GM12878 (cell line): ENCODE measurements at regions of chr2 and their contacts with region 1.

Region 1: GRCh38 chr2:73970850-73971471 is 13.7 kb upstream of the TET3 start:
- DNase-seq: peak; percentile 88
- ATAC-seq: peak; percentile 84
- H3K4me3 ChIP-seq: peak overlapping the region; percentile 51; the same call in 1 of the 2 replicates
- H3K27ac ChIP-seq: peak overlapping the region; percentile 92
- H3K4me1 ChIP-seq: peaks cover 38% of the 10 kb centered on the region
- H3K27me3 ChIP-seq: no peaks in the 10 kb centered on the region
- CTCF ChIP-seq: no peak
- EP300 ChIP-seq: no peak
- POLR2A ChIP-seq: peak; percentile 53; the same call in 1 of the 2 replicates
- RAD21 ChIP-seq: no peak

Region 2: DNA sequence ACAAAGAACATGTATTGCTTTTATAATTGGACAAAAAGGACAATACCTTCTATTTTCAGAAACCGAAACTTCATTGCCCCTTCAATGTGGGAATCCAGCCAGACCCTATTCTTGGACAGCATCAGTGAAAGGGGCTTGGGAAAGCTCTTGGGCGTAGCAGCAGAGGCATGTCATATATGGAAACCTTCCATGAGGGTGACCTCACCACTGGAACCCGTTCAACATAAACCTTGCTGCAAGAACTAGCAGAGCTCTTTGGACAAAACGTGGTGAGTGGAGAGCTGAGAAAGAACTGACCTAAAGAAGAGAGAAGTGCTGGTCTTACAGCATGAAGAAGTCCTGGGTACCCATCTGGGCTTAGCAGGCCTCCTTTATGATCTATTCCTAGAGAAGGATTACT is 100.9 kb before region 1 on chr2:
- CTCF ChIA-PET with region 1: no interaction called
- POLR2A ChIA-PET with region 1: interaction called, 10 read pairs
- RAD21 ChIA-PET with region 1: no interaction called
- SMC1A ChIA-PET with region 1: no interaction called
- in situ Hi-C with region 1: no loop called
- intact Hi-C with region 1: no loop called
- DNase-seq: no peak
- ATAC-seq: no peak
- H3K4me3 ChIP-seq: no peak overlapping the region
- H3K27ac ChIP-seq: no peak overlapping the region
- H3K4me1 ChIP-seq: no peaks in the 10 kb centered on the region
- H3K27me3 ChIP-seq: no peaks in the 10 kb centered on the region
- CTCF ChIP-seq: no peak
- EP300 ChIP-seq: no peak
- POLR2A ChIP-seq: no peak
- RAD21 ChIP-seq: no peak

Region 3: GRCh38 chr2:73926493-73927338 is 44.2 kb before region 1 on chr2 and contains the start of gene DGUOK:
- CTCF ChIA-PET with region 1: interaction called, 3 read pairs
- POLR2A ChIA-PET with region 1: interaction called, 5 read pairs
- RAD21 ChIA-PET with region 1: interaction called, 5 read pairs
- SMC1A ChIA-PET with region 1: interaction called, 8 read pairs
- in situ Hi-C with region 1: no loop called
- intact Hi-C with region 1: loop called (anchors 2 kb)
- DNase-seq: peak; percentile 97
- ATAC-seq: peak; percentile 96
- H3K4me3 ChIP-seq: peak within 1 kb of the TSS; percentile 97
- H3K27ac ChIP-seq: peak within 1 kb of the TSS; percentile 87
- H3K4me1 ChIP-seq: peaks cover 13% of the 10 kb centered on the region
- H3K27me3 ChIP-seq: no peaks in the 10 kb centered on the region
- CTCF ChIP-seq: no peak
- EP300 ChIP-seq: peak; percentile 13 to 25; a peak in 2 of 4 replicates
- POLR2A ChIP-seq: peak; percentile 97
- RAD21 ChIP-seq: no peak
- polyA plus RNA-seq, gene DGUOK: 175 to 234 TPM